ENCODE measurements at regions of chr22 and their contacts with region 1.

Region 1: DNA sequence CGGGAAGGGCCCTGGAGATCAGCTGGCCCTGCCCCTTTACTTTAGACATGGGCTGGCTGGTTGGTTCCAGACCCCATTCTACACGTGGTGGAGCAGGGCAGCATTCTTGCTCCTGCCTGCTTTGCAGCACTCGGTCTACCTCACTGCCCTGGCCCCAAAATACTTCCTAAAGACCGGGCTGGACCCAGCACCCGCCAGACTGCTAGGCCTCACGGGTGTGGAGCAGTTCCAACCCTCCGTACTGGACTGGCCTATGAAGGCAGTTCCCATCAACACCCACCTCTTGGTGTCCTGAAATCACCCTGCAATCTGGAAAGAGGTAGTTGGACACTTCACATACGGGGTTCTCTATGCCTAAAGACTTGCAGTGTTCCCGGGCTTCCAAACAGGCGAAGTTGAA is 6.4 kb downstream of the MCAT start:
- DNase-seq: no peak
- H3K4me3 ChIP-seq: no peak overlapping the region
- H3K27ac ChIP-seq: no peak overlapping the region
- H3K4me1 ChIP-seq: peaks cover 0 to 8% (median 2%) of the 10 kb centered on the region in 4 experiments
- H3K27me3 ChIP-seq: no peaks in the 10 kb centered on the region

Region 2: DNA sequence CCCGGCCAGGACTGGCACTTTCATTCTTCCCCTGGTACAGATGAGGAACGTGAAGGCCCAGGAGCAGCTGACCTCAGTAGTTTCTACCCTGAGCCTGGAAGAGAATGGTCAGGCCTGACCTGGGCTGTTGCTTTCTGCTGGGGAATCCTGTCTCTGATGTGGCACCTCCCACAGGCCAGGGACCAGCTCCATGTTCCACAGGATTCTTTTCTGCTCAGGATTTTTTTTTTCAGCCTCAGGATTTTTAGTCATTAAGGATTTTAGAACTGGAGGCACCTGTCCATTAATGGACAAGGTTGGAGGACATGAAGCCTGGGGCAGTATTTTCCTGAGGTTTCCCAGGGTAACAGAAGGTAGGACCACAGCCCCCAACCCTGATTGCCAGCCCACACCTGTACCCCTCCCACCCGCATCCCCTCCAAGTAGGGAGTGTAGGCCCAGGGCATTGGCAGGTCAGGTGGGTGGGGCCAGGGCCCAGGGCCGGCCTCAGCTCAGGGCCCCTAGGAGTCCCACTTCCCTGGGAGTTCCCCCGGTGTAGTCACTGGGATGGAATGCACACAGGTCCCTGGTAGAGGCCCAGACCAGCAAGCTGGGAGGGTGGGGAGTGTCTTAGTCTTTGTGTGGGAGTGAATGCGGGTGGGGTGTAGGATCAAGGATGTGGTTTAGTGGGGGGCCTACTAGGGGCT is 10.2 kb before region 1 on chr22:
- CTCF ChIA-PET with region 1: interaction called, 11 read pairs
- POLR2A ChIA-PET with region 1: no interaction called
- DNase-seq: no peak
- H3K4me3 ChIP-seq: no peak overlapping the region
- H3K27ac ChIP-seq: no peak overlapping the region
- H3K4me1 ChIP-seq: peaks cover 2 to 39% (median 33%) of the 10 kb centered on the region in 4 experiments
- H3K27me3 ChIP-seq: no peaks in the 10 kb centered on the region

Region 3: DNA sequence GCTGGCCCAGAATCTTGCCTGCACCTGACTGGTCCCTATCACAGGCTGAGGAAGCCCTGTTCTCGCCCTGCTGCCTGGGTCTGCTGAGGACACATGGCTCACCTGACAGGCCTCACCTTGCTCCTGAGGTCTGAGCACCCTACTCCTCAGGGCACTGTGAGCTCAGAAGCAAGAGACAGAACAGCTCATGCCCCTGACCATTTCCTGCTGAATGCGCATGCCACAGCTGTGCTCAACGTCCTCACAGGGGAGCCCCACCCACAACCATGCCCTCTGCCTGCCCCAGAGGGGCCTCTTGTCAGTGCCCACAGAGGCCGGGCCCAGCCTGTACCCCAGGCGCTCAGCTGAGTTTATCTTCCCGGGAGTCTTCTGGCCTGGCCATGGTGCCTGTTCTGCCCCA is 11.8 kb after region 1 on chr22:
- CTCF ChIA-PET with region 1: interaction called, 14 read pairs
- POLR2A ChIA-PET with region 1: interaction called, 3 read pairs
- DNase-seq: peak in 1 of 3 donors; percentile 17
- H3K4me3 ChIP-seq: no peak overlapping the region
- H3K27ac ChIP-seq: no peak overlapping the region
- H3K4me1 ChIP-seq: peaks cover 0 to 53% (median 45%) of the 10 kb centered on the region in 4 experiments
- H3K27me3 ChIP-seq: no peaks in the 10 kb centered on the region

Measured in common myeloid progenitor, CD34-positive (primary cell).